K562 (cell line): ENCODE measurements at regions of chr14 and their contacts with region 1.

Region 1: DNA sequence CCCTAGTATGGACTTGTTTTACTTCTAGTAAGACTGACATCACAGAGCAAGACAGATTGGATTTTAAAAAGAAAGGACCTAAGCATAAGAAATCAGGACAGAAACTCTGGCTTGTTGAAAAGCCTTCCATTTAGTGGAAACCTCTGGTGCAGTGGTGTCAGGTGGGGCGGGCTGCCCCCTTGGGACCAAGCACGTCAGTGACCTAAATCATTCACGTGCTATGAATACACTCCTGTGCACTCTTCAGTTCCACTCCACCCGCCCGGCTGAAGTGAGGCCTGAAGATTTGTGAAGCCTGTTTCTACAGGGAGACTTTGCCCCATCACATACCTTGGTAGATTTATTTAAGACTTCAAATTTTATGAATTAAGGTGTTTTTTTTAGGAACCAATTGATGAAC is 58.2 kb upstream of the STRN3 start:
- DNase-seq: peak; percentile 19 to 41 (median 37)
- ATAC-seq: peak; percentile 87
- H3K4me3 ChIP-seq: no peak overlapping the region
- H3K27ac ChIP-seq: no peak overlapping the region
- H3K4me1 ChIP-seq: peaks cover 0 to 6% of the 10 kb centered on the region in 2 experiments; a peak in 3 of 5 replicates
- H3K27me3 ChIP-seq: no peaks in the 10 kb centered on the region
- CTCF ChIP-seq: peak; percentile 33 to 43 (median 40)
- EP300 ChIP-seq: no peak
- POLR2A ChIP-seq: no peak
- RAD21 ChIP-seq: peak in 1 of 2 experiments; percentile 46; a peak in 2 of 4 replicates

Region 2: GRCh38 chr14:30894923-30895515 is 189.4 kb before region 1 on chr14:
- CTCF ChIA-PET with region 1: no interaction called
- POLR2A ChIA-PET with region 1: no interaction called
- in situ Hi-C with region 1: no loop called
- intact Hi-C with region 1: loop called (anchors 5 kb)
- DNase-seq: no peak
- ATAC-seq: no peak
- H3K4me3 ChIP-seq: no peak overlapping the region
- H3K27ac ChIP-seq: no peak overlapping the region
- H3K4me1 ChIP-seq: no peaks in the 10 kb centered on the region
- H3K27me3 ChIP-seq: no peaks in the 10 kb centered on the region
- CTCF ChIP-seq: no peak
- EP300 ChIP-seq: no peak
- POLR2A ChIP-seq: no peak
- RAD21 ChIP-seq: no peak

Region 3: DNA sequence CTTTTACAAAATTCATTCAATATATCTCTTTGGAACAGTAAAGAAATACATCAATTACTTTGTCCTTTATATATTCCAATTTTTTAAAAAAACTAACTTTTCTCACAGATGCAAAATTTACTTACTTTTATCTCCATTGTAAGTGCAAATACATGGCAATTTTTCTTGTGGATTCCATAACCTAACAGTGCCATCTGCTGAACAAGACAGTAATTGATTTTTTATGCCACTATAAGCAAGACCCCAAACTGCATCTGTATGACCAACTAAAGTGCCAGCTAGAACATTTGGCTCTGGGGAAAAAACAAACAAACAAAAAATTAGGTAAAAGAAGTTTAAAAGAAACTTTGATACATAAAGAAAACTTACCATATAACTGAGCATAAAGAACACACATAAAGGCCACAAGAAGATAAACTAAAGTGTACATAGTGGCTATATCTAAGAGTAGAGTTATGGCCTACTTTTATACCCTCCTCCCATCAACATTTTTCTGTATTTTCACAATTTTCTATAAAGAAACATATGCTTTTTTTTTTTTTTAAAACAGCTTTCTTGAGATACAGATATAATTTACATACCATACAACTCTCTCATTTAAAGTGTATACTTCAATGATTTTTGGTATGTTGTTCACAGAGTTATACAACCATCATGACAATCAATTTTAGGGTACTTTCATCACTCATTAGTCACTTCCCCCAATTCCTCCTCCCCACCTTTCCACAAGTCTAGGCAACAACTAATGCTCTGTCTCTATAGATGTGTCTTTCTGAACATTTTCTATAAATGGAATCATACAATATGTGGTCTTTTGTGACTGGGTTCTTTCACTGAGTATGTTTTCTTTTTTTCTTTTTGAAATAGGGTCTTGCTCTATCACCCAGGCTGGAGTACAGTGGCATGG is 177.4 kb before region 1 on chr14:
- CTCF ChIA-PET with region 1: no interaction called
- POLR2A ChIA-PET with region 1: no interaction called
- in situ Hi-C with region 1: no loop called
- intact Hi-C with region 1: loop called (anchors 5 kb)
- DNase-seq: no peak
- ATAC-seq: peak; percentile 53
- H3K4me3 ChIP-seq: no peak overlapping the region
- H3K27ac ChIP-seq: no peak overlapping the region
- H3K4me1 ChIP-seq: peaks cover 0 to 6% of the 10 kb centered on the region in 2 experiments; a peak in 2 of 5 replicates
- H3K27me3 ChIP-seq: no peaks in the 10 kb centered on the region
- CTCF ChIP-seq: peak in 1 of 3 experiments; percentile 28; a peak in 1 of 6 replicates
- EP300 ChIP-seq: no peak
- POLR2A ChIP-seq: no peak
- RAD21 ChIP-seq: peak in 1 of 2 experiments; percentile 43; a peak in 2 of 4 replicates

Region 4: GRCh38 chr14:30921305-30921704 is 163.1 kb before region 1 on chr14:
- CTCF ChIA-PET with region 1: no interaction called
- POLR2A ChIA-PET with region 1: no interaction called
- in situ Hi-C with region 1: no loop called
- intact Hi-C with region 1: no loop called
- DNase-seq: no peak
- ATAC-seq: peak; percentile 74
- H3K4me3 ChIP-seq: no peak overlapping the region
- H3K27ac ChIP-seq: no peak overlapping the region
- H3K4me1 ChIP-seq: no peaks in the 10 kb centered on the region
- H3K27me3 ChIP-seq: no peaks in the 10 kb centered on the region
- CTCF ChIP-seq: no peak
- EP300 ChIP-seq: no peak
- POLR2A ChIP-seq: no peak
- RAD21 ChIP-seq: no peak

Region 5: DNA sequence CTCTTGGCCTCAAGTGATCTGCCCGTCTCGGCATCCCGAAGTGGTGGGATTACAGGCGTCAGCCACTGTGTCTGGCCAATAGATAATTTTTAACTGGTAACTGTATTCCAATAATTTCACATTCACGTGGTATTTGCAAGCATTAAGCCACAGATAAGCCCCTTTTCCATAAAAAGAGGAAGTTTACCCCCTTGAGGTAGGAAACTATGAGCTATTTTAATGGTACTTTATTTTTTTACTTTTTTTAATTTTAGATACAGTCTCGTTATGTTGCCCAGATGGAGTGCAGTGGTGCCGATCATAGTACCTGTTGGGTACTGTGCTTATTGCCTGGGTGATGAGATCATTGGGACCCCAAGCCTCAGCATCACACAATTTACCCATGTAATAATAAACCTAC is 101.9 kb before region 1 on chr14:
- CTCF ChIA-PET with region 1: interaction called, 11 read pairs
- POLR2A ChIA-PET with region 1: interaction called, 3 read pairs
- in situ Hi-C with region 1: loop called (anchors 5 kb)
- intact Hi-C with region 1: loop called (anchors 1 kb)
- DNase-seq: no peak
- ATAC-seq: no peak
- H3K4me3 ChIP-seq: no peak overlapping the region
- H3K27ac ChIP-seq: peak overlapping the region; percentile 18; the same call in 2 of the 3 replicates
- H3K4me1 ChIP-seq: peaks cover 0 to 3% of the 10 kb centered on the region in 2 experiments; a peak in 3 of 5 replicates
- H3K27me3 ChIP-seq: no peaks in the 10 kb centered on the region
- CTCF ChIP-seq: no peak
- EP300 ChIP-seq: no peak
- POLR2A ChIP-seq: no peak
- RAD21 ChIP-seq: no peak